Calu3 (cell line): ENCODE measurements at regions of chr14 and their contacts with region 1.

Region 1: DNA sequence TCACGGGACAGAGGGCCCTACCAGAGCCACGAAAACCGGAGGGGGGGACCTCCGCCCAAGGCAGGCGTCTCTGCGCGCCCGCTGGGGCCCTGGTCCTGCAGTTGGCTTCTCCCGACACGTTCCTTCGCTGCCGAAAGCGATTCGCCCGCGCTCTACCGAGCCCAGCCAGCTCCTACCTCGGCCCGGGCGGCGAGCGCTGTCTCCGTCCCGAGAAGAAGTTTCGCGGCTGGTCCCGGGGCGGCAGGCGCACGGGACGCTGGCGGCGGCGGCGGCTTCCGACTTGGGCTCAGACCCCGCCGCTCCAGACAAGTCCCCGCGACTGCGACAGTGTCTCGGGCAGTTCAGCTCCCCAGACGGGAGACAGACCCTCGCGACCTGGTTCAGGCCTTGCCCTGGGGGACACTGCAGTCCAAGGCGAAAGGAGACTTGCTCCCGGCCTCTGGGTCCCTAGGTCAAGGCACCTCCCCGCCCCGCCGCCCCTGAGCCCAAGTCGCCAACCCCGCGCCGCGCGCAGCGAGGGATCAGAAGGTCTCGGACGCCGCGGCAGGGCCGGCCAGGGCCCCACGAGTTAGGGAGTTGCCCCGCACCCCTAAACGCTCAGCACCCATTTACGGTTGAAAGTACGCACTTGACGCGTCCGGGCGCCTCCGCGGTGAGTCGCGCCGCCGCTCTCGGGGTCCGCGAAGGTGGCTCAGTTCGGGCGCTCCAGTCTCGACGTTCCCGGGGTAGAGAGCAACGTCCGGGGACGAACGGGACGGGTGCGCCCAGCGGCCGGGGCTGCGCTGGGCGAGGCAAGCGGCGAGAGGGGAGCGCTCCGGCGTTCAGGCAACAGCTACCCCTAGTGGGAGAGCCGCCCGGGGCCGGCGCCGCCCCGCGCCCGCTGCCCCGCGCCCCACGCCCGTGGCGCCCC is 1.4 kb upstream of the DIO3 start:
- DNase-seq: peak; percentile 77
- H3K4me3 Mint-ChIP-seq: peak overlapping the region; percentile 76
- H3K27ac Mint-ChIP-seq: no peak overlapping the region
- H3K4me1 Mint-ChIP-seq: peaks cover 9% of the 10 kb centered on the region
- H3K27me3 Mint-ChIP-seq: peaks cover 29% of the 10 kb centered on the region
- CTCF ChIP-seq: no peak

Region 2: GRCh38 chr14:101480747-101481530 is 78.9 kb before region 1 on chr14:
- CTCF ChIA-PET with region 1: interaction called, 3 read pairs
- intact Hi-C with region 1: loop called (anchors 2 kb)
- DNase-seq: peak; percentile 42
- H3K4me3 Mint-ChIP-seq: peak overlapping the region; percentile 28
- H3K27ac Mint-ChIP-seq: peak overlapping the region; percentile 83
- H3K4me1 Mint-ChIP-seq: peaks cover 48% of the 10 kb centered on the region
- H3K27me3 Mint-ChIP-seq: no peaks in the 10 kb centered on the region
- CTCF ChIP-seq: no peak